Activated B cell treated with CpG ODN at 0.5 μM for 24 hours (primary cell): ENCODE measurements at regions of chrX and their contacts with region 1.

Region 1: DNA sequence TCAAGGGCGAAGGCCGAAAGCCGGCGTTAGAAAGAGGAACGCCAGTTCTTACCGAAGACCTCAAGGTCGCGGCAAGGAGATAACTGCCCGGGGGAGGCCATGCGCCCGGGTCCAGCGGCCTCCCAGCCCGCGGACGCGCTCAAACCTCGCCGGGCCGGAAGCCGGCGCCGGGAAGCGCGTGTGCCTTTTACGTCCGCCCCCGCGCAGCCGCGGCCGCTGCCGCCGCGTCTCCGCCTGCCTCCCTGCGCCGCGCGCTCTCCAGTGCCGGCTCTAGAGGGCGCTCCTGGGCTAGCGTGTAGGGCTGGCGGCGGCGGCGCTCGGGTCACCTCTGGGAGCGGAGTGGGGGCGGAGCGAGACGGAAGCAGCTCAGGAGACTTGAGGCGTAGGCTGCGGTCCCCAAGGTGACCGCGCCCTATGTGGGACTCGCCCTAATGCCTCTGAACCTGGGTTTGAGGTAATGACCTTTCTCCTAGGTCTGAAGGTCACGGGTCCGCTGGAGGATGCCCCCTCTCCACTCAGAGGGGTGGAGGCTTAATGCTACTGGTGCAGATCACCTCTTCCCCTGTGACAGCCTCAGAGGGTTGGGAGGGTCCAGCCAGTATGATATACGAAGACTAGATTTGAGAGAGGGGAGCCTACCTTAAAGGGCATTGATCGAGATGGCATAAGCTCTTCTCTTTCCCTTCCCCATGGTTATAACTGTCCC is 839 bp downstream of the SLC25A5 start:
- DNase-seq: peak; percentile 82
- ATAC-seq: peak; percentile 76
- H3K4me3 Mint-ChIP-seq: peak overlapping the region; percentile 86
- H3K27ac Mint-ChIP-seq: peak overlapping the region; percentile 88
- H3K4me1 Mint-ChIP-seq: peaks cover 6% of the 10 kb centered on the region
- H3K27me3 Mint-ChIP-seq: no peaks in the 10 kb centered on the region
- CTCF ChIP-seq: no peak

Region 2: GRCh38 chrX:118901991-118902390 is 567.1 kb before region 1 on chrX:
- CTCF ChIA-PET with region 1: no interaction called
- POLR2A ChIA-PET with region 1: no interaction called
- intact Hi-C with region 1: no loop called
- DNase-seq: no peak
- ATAC-seq: no peak
- H3K4me3 Mint-ChIP-seq: no peak overlapping the region
- H3K27ac Mint-ChIP-seq: no peak overlapping the region
- H3K4me1 Mint-ChIP-seq: peaks cover 52% of the 10 kb centered on the region
- H3K27me3 Mint-ChIP-seq: no peaks in the 10 kb centered on the region
- CTCF ChIP-seq: no peak

Region 3: DNA sequence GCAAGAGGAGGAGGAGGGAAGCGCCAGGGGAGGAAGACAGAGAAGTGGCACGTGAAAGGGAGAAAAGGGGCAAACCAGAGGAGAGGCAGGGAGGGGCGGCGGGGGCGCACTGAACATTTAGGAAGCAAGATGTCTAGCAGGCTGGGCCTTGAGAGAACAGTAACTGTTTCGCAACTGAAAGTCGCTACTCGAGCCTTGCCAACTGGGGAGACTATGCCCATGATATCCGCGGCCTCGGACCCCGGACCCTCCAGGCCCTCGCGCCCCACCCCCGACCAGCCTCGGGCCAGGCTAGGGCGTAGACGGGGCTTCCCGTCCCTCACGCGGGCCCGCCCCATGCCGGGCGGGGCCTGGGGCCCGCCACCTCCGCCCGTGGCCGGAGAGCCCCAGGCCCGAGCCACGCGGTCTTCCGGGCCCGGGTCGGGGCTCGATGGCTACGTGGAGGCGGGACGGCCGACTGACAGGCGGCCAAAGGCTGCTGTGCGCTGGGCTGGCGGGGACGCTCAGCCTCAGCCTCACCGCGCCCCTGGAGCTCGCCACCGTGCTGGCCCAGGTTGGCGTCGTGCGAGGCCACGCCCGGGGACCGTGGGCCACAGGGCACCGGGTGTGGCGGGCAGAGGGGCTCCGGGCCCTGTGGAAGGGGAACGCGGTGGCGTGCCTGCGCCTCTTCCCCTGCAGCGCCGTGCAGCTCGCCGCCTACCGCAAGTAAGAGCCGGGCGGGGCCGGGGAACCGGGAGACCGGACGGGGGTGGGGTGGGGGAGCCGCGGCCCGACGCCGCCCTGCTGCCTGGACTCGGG is 69.9 kb before region 1 on chrX and contains the start of gene SLC25A43:
- CTCF ChIA-PET with region 1: no interaction called
- POLR2A ChIA-PET with region 1: interaction called, 8 read pairs
- intact Hi-C with region 1: loop called (anchors 1 kb)
- DNase-seq: peak; percentile 49
- ATAC-seq: peak; percentile 93
- H3K4me3 Mint-ChIP-seq: peak within 1 kb of the TSS; percentile 93
- H3K27ac Mint-ChIP-seq: peak within 1 kb of the TSS; percentile 92
- H3K4me1 Mint-ChIP-seq: peaks cover 32% of the 10 kb centered on the region
- H3K27me3 Mint-ChIP-seq: no peaks in the 10 kb centered on the region
- CTCF ChIP-seq: no peak
- total RNA-seq, gene SLC25A43: 11.0 and 11.9 TPM in 2 replicates

Region 4: GRCh38 chrX:119482481-119483480 is 13.7 kb after region 1 on chrX:
- CTCF ChIA-PET with region 1: interaction called, 17 read pairs
- POLR2A ChIA-PET with region 1: interaction called, 10 read pairs
- intact Hi-C with region 1: loop called (anchors 1 kb)
- DNase-seq: peak; percentile 53
- ATAC-seq: peak; percentile 90
- H3K4me3 Mint-ChIP-seq: peak overlapping the region; percentile 84
- H3K27ac Mint-ChIP-seq: no peak overlapping the region
- H3K4me1 Mint-ChIP-seq: peaks cover 9% of the 10 kb centered on the region
- H3K27me3 Mint-ChIP-seq: no peaks in the 10 kb centered on the region
- CTCF ChIP-seq: no peak

Region 5: GRCh38 chrX:119574394-119575266 is 105.5 kb after region 1 on chrX and contains the start of gene UBE2A:
- CTCF ChIA-PET with region 1: no interaction called
- POLR2A ChIA-PET with region 1: interaction called, 7 read pairs
- intact Hi-C with region 1: loop called (anchors 2 kb)
- DNase-seq: peak; percentile 78
- ATAC-seq: peak; percentile 94
- H3K4me3 Mint-ChIP-seq: peak within 1 kb of the TSS; percentile 93
- H3K27ac Mint-ChIP-seq: peak within 1 kb of the TSS; percentile 91
- H3K4me1 Mint-ChIP-seq: peaks cover 38% of the 10 kb centered on the region
- H3K27me3 Mint-ChIP-seq: no peaks in the 10 kb centered on the region
- CTCF ChIP-seq: no peak
- total RNA-seq, gene UBE2A: 65.9 and 73.5 TPM in 2 replicates

Region 6: GRCh38 chrX:119791438-119792231 is 322.6 kb after region 1 on chrX and contains the start of gene RPL39:
- CTCF ChIA-PET with region 1: no interaction called
- POLR2A ChIA-PET with region 1: interaction called, 26 read pairs
- intact Hi-C with region 1: no loop called
- DNase-seq: peak; percentile 69
- ATAC-seq: peak; percentile 90
- H3K4me3 Mint-ChIP-seq: peak within 1 kb of the TSS; percentile 95
- H3K27ac Mint-ChIP-seq: peak within 1 kb of the TSS; percentile 96
- H3K4me1 Mint-ChIP-seq: peaks cover 37% of the 10 kb centered on the region
- H3K27me3 Mint-ChIP-seq: no peaks in the 10 kb centered on the region
- CTCF ChIP-seq: no peak
- total RNA-seq, gene RPL39: 3,684 and 4,270 TPM in 2 replicates

Region 7: DNA sequence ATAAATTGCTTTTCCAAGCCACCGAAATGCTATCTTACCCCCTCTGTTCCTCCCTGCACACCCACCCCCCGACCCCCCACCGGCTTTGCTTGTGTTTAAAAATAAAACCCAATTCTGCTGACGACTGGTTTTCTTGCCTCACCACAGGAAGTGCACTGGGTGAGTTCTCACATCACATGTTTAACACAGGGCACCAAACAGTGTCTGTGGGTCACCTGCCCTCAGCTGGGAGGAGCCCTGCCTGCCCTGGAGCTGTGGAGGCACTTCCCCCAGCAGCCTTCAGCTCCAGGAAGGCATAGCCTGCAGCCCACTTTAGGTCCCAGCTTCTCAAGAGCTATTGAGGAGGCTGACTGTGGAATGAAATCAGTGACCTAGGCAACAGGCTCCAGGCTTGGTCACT is 833.4 kb after region 1 on chrX:
- CTCF ChIA-PET with region 1: no interaction called
- POLR2A ChIA-PET with region 1: no interaction called
- intact Hi-C with region 1: loop called (anchors 5 kb)
- DNase-seq: peak; percentile 15
- ATAC-seq: peak; percentile 97
- H3K4me3 Mint-ChIP-seq: peak overlapping the region; percentile 50
- H3K27ac Mint-ChIP-seq: peak overlapping the region; percentile 69
- H3K4me1 Mint-ChIP-seq: peaks cover 36% of the 10 kb centered on the region
- H3K27me3 Mint-ChIP-seq: no peaks in the 10 kb centered on the region
- CTCF ChIP-seq: no peak

Region 8: DNA sequence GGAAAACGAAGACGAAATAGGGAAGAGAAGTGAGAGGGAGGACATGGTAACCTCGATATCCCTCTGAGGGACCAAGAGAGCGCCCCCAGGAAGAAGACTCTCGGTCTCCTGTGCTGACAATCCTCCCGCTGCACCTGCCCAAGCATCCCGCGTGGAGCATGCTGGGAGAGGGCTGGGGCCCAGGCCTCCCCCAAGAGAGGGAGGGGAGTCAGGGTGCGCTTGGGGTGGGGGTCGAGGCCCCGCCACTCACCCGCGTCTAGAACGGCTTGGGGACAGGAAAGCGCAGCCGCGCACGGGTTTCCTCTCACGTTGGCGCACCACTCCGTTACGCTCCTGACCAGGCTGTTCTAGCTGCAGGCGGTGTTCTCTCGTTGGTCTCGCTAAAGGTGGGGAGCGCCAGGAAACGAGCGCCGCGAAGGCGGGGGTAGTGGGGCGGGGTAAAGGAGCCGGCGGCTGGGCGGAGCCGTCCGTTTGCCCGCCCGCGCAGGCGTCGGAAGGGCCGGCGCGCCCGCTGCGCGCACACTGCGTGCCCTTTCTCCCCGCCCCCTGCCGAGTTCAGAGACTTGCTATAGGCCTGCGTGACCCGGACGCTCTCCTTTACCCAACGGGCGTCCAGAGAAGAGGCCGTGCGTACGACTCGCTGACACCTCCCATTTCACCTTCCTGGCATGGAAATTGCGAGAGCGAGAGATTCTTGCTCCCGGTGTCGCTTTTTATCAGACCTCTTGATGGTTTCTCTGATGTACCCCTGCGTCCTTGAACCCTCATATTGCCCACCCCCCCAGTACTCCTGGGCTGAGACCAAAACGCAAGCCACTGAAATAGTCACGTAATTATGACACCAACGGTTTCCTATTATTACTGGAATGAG is 1160.8 kb after region 1 on chrX and contains the start of gene C1GALT1C1:
- CTCF ChIA-PET with region 1: no interaction called
- POLR2A ChIA-PET with region 1: no interaction called
- intact Hi-C with region 1: loop called (anchors 10 kb)
- DNase-seq: peak; percentile 80
- ATAC-seq: peak; percentile 92
- H3K4me3 Mint-ChIP-seq: peak within 1 kb of the TSS; percentile 93
- H3K27ac Mint-ChIP-seq: peak within 1 kb of the TSS; percentile 97
- H3K4me1 Mint-ChIP-seq: peaks cover 8% of the 10 kb centered on the region
- H3K27me3 Mint-ChIP-seq: no peaks in the 10 kb centered on the region
- CTCF ChIP-seq: no peak
- total RNA-seq, gene C1GALT1C1: 8.2 and 8.7 TPM in 2 replicates